ENCODE measurements at regions of chr6 and their contacts with region 1.

Region 1: GRCh38 chr6:21593412-21593926 is at the start of gene SOX4:
- DNase-seq: peak; percentile 87 to 97
- ATAC-seq: peak; percentile 79 to 90 (median 87)
- H3K4me3 ChIP-seq: peak within 1 kb of the TSS; percentile 62 to 88 (median 80)
- H3K27ac ChIP-seq: peak within 1 kb of the TSS; percentile 59 to 96 (median 90)
- H3K4me1 ChIP-seq: peaks cover 0 to 39% (median 15%) of the 10 kb centered on the region in 9 donors
- H3K27me3 ChIP-seq: no peaks in the 10 kb centered on the region
- CTCF ChIP-seq: no peak
- total RNA-seq, gene SOX4: 3.1 to 19.1 (median 7.7) TPM

Region 2: GRCh38 chr6:20770773-20771172 is 822.7 kb before region 1 on chr6:
- intact Hi-C with region 1: loop called in 1 of 10 experiments (anchors 10 kb)
- DNase-seq: no peak
- ATAC-seq: no peak
- H3K4me3 ChIP-seq: no peak overlapping the region
- H3K27ac ChIP-seq: no peak overlapping the region
- H3K4me1 ChIP-seq: peaks cover 0 to 12% (median 0%) of the 10 kb centered on the region in 9 donors
- H3K27me3 ChIP-seq: no peaks in the 10 kb centered on the region
- CTCF ChIP-seq: no peak

Region 3: DNA sequence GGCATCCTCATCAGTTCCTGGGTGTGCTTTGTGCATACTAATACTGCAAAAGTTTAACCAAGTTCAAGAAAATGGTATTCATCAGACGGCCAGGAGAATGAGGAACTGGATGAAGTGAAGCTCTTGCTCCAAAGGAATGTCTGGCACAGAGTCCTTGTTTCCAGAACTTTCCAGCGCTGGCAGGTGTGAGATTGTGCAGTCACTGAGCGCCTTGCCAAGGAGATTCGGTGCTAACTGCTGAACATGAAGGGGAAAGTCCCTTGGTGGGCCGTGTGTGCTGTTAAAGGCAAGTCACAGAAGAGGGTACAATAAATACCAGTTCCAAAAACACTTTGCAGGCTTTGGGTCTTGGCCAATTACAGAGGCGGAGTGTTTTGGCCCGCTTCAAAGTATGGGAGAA is 262.2 kb before region 1 on chr6:
- intact Hi-C with region 1: loop called in 1 of 10 experiments (anchors 10 kb)
- DNase-seq: peak in 1 of 2 donors; percentile 51
- ATAC-seq: peak; percentile 61 to 97 (median 83)
- H3K4me3 ChIP-seq: no peak overlapping the region
- H3K27ac ChIP-seq: no peak overlapping the region
- H3K4me1 ChIP-seq: peaks cover 0 to 12% (median 0%) of the 10 kb centered on the region in 9 donors
- H3K27me3 ChIP-seq: no peaks in the 10 kb centered on the region
- CTCF ChIP-seq: no peak

Region 4: DNA sequence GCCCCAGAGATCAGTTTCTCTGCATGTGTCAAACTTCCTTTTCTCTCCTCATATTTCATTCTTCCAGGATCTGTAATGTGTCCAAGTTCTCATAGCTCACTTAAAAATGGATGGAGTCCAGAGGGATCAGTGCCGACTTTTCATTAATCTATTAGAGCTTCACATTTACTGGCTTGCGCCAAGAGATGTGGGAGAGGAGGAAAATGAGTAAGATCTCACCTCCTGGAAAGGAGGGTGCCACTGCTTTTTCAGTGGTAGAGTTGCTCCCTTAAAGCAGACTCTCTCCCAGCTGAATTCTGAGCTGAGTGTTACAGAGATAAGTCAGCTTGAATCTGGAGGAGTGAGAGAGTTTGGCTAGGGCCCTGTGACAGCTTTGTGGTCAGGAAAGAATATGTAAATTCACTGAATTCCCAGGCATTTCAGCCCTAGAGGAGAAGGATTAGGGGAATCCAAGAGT is 176.0 kb after region 1 on chr6:
- intact Hi-C with region 1: loop called in 1 of 10 experiments (anchors 5 kb)
- DNase-seq: peak in 1 of 2 donors; percentile 61
- ATAC-seq: peak; percentile 69 to 95 (median 88)
- H3K4me3 ChIP-seq: no peak overlapping the region
- H3K27ac ChIP-seq: peak overlapping the region in 5 of 10 donors; percentile 17 to 68 (median 36)
- H3K4me1 ChIP-seq: peaks cover 0 to 54% (median 33%) of the 10 kb centered on the region in 9 donors
- H3K27me3 ChIP-seq: no peaks in the 10 kb centered on the region
- CTCF ChIP-seq: no peak

Region 5: DNA sequence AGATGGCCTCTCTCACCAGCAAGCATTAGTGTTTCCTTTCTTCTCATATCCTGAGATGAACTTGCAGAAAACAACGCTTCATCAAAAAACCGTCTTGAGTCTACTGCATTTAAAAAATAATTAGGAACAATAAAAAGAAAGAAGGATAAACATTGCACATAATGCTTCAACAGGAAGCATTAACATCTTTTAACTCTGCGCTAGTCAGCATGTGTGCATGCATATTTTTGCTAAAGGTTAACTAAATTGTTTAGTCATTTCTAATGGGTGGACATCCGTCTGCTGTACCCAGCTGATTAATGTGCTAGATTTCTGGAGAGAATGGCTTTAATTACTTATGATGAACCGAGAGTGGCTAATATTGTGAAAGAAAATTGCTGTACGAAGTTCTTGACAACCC is 349.4 kb after region 1 on chr6:
- intact Hi-C with region 1: loop called in 7 of 10 experiments (anchors 5 to 10 kb)
- DNase-seq: no peak
- ATAC-seq: no peak
- H3K4me3 ChIP-seq: no peak overlapping the region
- H3K27ac ChIP-seq: peak overlapping the region in 1 of 10 donors; percentile 22
- H3K4me1 ChIP-seq: peaks cover 0 to 27% (median 8%) of the 10 kb centered on the region in 9 donors
- H3K27me3 ChIP-seq: no peaks in the 10 kb centered on the region
- CTCF ChIP-seq: no peak

Region 6: DNA sequence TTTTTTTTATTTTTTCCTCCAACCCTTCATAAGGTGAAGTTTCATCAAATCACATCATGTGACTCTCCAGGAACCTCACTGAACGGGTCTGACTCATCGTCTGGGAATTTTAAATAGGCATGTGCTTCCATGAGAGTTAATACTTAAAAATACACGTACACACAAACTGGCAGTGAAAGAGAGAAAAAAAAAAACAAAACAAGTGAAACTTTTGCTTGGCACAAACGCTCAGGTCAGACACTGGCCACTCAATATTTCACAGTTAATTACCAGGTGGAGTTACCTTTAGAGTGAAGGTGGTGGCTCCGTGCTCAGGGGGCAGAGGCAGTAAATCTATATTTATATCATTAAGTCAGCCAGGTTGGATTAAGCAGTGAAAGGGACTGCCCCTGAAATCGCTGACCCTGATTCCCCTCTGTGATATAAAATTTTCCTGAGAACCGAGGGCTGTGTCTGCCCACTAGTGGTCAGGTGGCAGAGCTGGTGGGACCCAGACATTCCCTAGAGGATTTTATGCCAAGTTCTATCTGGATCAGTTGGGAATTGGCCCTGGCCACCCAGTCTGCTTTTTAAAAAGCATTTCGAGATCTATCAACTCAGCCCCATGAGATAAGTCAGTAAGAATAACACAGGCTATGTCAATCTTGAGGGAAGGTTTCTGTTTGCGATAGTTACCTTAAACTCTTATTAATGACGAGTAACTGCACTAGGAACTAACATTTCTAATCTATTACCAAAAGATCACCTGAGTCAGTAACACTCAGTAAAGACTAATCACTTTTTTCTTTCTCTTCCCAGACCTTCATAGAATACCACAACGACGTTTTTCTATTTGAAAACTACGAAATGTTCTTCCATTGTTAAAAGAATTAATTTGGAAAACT is 1235.0 kb after region 1 on chr6:
- intact Hi-C with region 1: loop called in 3 of 10 experiments (anchors 10 kb)
- DNase-seq: peak in 1 of 2 donors; percentile 30
- ATAC-seq: peak; percentile 44 to 91 (median 88)
- H3K4me3 ChIP-seq: peak overlapping the region in 2 of 10 donors; percentile 7 to 15
- H3K27ac ChIP-seq: peak overlapping the region in 6 of 10 donors; percentile 39 to 68 (median 54)
- H3K4me1 ChIP-seq: peaks cover 0 to 23% (median 13%) of the 10 kb centered on the region in 9 donors
- H3K27me3 ChIP-seq: no peaks in the 10 kb centered on the region
- CTCF ChIP-seq: peak; percentile 37 to 74 (median 57)

Measured in heart right ventricle (tissue), 16 donors.